Lower leg skin (tissue), 4 donors: ENCODE measurements at regions of chr12 and their contacts with region 1.

Region 1: DNA sequence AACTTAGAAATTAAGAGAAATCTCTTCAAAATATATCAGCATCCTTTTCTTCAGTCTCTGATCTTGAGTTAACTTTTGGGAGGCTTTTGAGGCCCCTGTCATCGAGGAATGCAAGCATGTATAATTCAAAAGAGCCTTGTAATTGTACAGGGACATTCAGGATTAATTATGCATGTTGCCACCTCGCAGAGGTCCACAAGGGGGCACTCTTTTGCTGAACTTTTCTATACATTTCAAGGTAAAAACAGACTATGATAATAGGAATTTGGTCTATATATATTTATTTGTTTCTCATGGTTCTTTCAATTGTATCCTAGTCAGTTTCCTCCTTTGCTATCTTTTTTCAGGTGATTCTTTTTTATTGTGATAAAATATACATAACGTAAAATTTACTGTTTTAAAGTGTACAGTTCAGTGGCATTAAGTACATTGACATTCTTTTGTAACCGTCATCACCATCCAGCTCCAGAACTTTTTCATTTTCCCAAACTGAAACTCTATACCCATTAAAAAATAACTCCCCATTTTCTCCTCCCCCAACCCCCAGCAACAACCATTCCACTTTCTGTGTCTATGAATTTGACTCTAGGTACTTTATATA is 47.0 kb upstream of the SLC2A13 start:
- DNase-seq: peak; percentile 52 to 88
- H3K4me3 ChIP-seq: no peak overlapping the region
- CTCF ChIP-seq: no peak
- POLR2A ChIP-seq: no peak

Region 2: DNA sequence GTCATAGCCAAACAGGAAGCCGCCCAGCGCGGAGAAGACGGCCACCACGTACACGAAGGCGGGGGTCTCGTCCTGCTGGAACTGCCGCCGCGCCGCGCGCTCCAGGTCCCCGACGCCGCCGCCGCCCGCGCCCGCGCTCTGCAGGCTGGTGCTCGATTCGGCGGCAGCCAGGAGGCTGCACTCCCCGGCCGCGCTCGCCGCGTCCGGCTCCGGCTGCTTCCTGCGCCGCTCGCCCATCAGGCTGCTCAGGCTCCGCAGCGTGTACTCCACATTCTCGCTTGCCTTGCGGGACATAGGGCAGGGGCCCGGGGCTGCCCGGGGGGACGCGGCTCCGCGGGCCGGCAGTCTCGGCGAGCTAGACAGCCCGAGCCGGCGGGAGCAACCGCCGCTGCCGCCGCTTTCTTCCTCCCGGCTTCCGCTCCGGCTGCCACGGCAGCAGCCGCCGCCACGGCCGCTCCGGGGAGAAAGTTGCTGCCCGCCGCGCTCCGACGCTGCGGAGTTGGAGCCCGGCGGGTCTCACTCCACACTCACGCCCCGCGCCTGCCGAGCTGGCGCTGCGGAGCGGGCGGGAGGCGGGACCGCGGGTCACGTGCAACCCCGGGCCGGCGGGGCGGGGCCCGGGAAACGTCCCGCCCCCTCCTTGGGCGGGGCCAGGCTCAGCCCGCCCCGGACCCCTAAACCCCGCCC is 47.2 kb before region 1 on chr12 and contains the start of gene SLC2A13:
- intact Hi-C with region 1: no loop called
- DNase-seq: peak; percentile 63 to 93
- H3K4me3 ChIP-seq: peak within 1 kb of the TSS; percentile 88
- CTCF ChIP-seq: no peak
- POLR2A ChIP-seq: no peak
- total RNA-seq, gene SLC2A13: 9.2 to 15.2 (median 13.9) TPM

Region 3: GRCh38 chr12:40312982-40313576 is 160.2 kb after region 1 on chr12:
- intact Hi-C with region 1: loop called (anchors 10 kb)
- DNase-seq: no peak
- H3K4me3 ChIP-seq: no peak overlapping the region
- CTCF ChIP-seq: no peak
- POLR2A ChIP-seq: no peak